ENCODE measurements at regions of chr1 and their contacts with region 1.

Region 1: GRCh38 chr1:181479137-181479745 is 4.1 kb upstream of the CACNA1E start:
- DNase-seq: peak; percentile 78
- CTCF ChIP-seq: peak; percentile 95

Region 2: DNA sequence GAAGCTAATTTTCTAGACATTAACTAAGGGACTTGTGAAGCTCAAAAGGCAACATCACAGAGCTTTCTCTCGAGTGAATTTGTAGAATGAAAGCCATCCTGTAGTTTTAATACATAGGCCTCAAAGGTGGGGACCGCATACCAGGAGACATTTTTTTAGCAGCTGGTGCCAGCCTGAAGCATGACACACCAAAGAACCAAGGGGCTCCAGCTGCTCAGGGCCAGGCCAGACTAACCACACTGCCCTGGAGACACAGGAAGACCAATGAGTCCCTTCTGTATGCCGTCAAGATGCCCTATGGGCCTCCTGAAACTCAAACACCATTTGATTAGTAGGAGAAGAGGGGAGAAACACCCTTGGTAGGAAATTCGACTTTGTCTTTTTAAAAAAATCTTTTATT is 109.8 kb before region 1 on chr1:
- CTCF ChIA-PET with region 1: no interaction called
- POLR2A ChIA-PET with region 1: no interaction called
- DNase-seq: no peak
- CTCF ChIP-seq: no peak

Region 3: GRCh38 chr1:181430015-181430885 is 49.0 kb before region 1 on chr1:
- CTCF ChIA-PET with region 1: interaction called, 17 read pairs
- POLR2A ChIA-PET with region 1: no interaction called
- DNase-seq: peak; percentile 35
- CTCF ChIP-seq: no peak

Region 4: GRCh38 chr1:181459067-181459466 is 20.2 kb before region 1 on chr1:
- CTCF ChIA-PET with region 1: interaction called, 107 read pairs
- POLR2A ChIA-PET with region 1: no interaction called
- DNase-seq: no peak
- CTCF ChIP-seq: no peak

Region 5: GRCh38 chr1:181504399-181504842 is 25.2 kb after region 1 on chr1:
- CTCF ChIA-PET with region 1: interaction called, 213 read pairs
- POLR2A ChIA-PET with region 1: no interaction called
- DNase-seq: peak; percentile 72
- CTCF ChIP-seq: peak; percentile 52

Region 6: DNA sequence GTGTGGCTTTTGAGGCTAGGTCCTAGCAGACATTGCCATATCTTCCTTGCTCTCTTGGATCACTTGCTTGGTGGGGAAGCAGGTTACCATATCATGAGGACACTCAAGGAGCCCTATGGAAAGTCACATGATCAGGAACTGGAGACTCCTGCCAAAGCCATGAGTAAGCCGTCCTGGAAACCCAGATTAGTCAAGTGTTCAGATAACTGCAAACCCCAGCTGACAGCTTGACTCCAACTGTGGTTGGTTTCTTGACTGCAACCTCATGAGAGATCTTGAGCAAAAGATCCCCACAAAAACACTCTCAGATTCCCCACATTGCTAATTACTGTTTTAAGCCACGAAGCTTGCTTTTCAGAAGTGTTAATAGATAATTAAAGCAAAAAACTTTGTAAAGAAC is 62.7 kb after region 1 on chr1:
- CTCF ChIA-PET with region 1: no interaction called
- POLR2A ChIA-PET with region 1: no interaction called
- DNase-seq: no peak
- CTCF ChIP-seq: no peak

Region 7: GRCh38 chr1:181608948-181609347 is 129.7 kb after region 1 on chr1:
- CTCF ChIA-PET with region 1: no interaction called
- POLR2A ChIA-PET with region 1: no interaction called
- DNase-seq: no peak
- CTCF ChIP-seq: no peak

Region 8: GRCh38 chr1:181936768-181937581 is 457.7 kb after region 1 on chr1:
- CTCF ChIA-PET with region 1: interaction called, 75 read pairs
- POLR2A ChIA-PET with region 1: interaction called, 10 read pairs
- DNase-seq: peak; percentile 75
- CTCF ChIP-seq: peak; percentile 72

Region 9: GRCh38 chr1:182084487-182085316 is 605.5 kb after region 1 on chr1:
- CTCF ChIA-PET with region 1: interaction called, 74 read pairs
- POLR2A ChIA-PET with region 1: no interaction called
- DNase-seq: peak; percentile 85
- CTCF ChIP-seq: peak; percentile 86

Measured in GM10248 (cell line).